ENCODE measurements at regions of chr11 and their contacts with region 1.

Region 1: DNA sequence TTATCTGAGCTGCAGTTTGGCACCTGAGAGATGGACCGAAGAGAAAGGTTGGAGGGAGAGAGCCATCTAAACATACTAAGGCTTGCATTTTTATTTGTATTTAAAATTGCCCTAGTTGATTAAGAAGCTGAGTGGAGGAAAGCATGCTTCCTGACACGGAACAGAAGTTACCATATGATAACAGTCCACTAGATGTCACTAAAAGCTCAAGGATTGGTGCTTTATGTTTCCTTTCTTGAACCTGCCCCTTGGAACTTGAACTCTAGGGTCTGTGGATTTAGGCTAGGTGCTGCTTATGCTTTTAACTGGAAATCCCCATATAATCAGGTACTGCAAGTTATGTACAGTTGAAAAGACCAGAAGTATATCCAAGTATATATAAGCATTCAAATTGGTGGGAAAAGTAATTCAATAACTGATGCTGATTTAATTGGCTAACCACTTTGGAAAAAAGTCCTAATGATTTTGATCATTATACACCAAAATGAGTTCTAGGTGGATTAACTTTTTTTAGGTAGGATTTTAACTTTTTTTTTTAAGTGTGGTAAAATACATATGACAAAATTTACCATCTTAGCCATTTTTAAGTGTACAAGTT is 9.5 kb downstream of the RBMXL2 start:
- DNase-seq: peak in 1 of 2 experiments; percentile 59
- H3K4me3 ChIP-seq: no peak overlapping the region
- H3K4me1 ChIP-seq: no peaks in the 10 kb centered on the region
- H3K27me3 ChIP-seq: peaks cover 33% of the 10 kb centered on the region

Region 2: DNA sequence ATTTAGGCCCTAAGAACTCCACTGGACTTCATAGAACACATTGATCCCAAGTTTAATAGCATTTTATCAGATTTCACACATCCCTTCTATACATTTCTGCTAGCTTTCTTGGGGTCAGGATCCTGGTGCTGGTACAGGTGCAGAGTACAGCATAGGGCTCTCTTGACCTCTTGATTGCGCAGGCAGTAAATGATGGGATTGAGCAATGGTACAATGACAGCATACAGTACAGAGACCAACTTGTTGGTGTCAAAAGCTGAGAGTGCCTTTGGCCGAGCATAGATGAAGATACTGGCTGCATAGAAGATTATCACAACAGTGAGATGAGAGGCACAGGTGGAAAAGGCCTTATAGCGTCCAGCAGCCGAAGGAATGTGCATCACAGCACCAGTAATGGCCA is 303.7 kb before region 1 on chr11:
- in situ Hi-C with region 1: no loop called
- DNase-seq: no peak
- H3K4me3 ChIP-seq: no peak overlapping the region
- H3K4me1 ChIP-seq: no peaks in the 10 kb centered on the region
- H3K27me3 ChIP-seq: no peaks in the 10 kb centered on the region

Region 3: DNA sequence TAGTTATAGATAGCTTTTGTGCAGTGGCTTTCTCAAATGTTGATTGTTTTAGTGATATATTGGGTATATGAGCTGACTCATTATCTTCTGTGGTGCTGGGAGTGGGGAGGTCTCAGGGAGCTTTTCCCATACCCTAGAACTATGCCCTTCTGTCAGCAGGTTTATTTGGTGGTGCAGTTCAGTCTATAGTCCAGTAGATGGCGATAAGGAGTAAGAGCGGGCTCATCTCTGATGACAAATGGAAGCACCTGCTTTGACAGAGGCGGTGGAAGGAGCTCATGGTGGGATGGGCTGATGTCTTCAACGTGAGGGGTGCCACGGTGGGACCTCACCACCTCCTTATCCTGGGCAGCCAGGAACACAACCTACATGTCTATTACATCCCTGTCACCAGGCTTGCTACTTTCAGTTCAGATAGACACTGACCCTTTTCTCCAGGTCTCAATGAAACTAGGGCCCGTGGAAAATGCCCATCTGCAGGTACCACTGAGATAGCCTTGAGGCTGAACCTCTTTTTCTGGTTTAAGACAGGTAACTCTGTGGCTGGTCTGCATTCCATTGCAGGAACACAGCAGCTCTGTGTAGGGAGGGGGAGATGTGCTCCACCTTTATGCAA is 285.8 kb before region 1 on chr11:
- in situ Hi-C with region 1: no loop called
- DNase-seq: peak; percentile 34 to 52
- H3K4me3 ChIP-seq: no peak overlapping the region
- H3K4me1 ChIP-seq: no peaks in the 10 kb centered on the region
- H3K27me3 ChIP-seq: peaks cover 3% of the 10 kb centered on the region; the same call in 1 of the 2 replicates

Region 4: DNA sequence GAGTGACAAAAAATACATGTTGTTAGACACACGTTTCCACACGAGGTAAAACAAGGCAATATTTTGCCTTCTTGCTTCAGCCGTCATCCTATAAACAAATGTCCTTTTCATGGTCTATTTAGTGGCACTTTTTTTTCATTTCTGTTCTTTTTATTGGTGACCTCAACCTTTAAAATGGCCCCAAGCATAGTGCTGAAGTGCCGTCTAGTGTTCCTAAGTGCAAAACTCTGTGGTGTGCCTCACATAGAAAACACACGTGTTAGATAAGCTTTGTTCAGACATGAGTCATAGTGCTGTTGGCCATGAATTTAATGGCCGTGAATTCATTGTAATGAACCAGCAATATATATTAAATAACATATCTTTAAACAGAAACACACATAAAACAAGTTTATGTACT is 592.3 kb after region 1 on chr11:
- in situ Hi-C with region 1: loop called (anchors 10 kb)
- DNase-seq: no peak
- H3K4me3 ChIP-seq: no peak overlapping the region
- H3K4me1 ChIP-seq: peaks cover 12% of the 10 kb centered on the region
- H3K27me3 ChIP-seq: peaks cover 2% of the 10 kb centered on the region; the same call in 1 of the 2 replicates

Measured in HAP-1 (cell line).